A549 (cell line): ENCODE measurements at regions of chr11 and their contacts with region 1.

Region 1: DNA sequence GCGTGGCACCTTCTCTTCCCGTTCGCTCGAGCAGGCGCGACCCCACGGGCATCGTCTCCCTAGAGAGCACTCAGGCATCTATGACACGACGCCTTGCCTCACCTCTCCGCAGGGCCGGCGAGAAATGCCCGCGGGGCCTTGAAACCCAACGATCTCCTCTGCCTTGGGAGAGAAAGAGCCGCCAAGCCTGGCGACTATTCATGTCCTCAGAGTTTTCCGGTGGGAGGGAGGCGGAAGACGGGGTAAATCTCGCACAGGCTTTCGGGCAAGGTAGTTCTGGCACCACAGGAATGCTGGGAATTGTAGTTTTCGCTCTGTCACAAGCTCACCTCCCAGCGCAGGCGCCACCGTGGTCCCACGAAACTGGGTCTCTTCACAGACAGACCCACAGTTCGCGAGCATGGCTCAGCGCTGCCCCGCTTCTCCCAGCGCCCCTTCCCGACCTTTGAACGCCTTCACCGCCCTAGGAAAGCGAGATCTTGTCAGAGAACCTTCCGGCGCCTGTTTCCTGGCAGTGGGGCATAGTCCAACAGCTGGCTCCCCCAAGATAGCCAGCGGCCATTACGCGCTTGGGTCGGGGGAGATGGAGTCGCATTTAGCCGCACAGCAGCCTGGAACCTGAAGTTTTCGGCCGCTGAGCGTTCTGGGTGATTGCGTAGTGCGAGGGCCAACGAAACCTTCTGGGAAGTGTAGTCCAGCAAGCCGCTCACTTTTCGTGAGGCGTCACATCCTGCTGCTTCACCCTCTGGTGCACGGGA is at the start of gene CCDC90B:
- DNase-seq: peak; percentile 97 to 98
- ATAC-seq: peak; percentile 96 to 97
- H3K4me3 ChIP-seq: peak within 1 kb of the TSS; percentile 81
- H3K27ac ChIP-seq: peak within 1 kb of the TSS; percentile 93 to 95
- H3K4me1 ChIP-seq: peaks cover 7% of the 10 kb centered on the region; the same call in 2 of the 3 replicates
- CTCF ChIP-seq: peak; percentile 57
- EP300 ChIP-seq: 0 out of 5 replicates have a peak, but pooled peaks of 1 of the 2 experiments have one; percentile 1
- POLR2A ChIP-seq: peak; percentile 85
- RAD21 ChIP-seq: 0 out of 5 replicates have a peak, but pooled peaks of 1 of the 2 experiments have one; percentile 10
- polyA plus RNA-seq, gene CCDC90B: 57.4 and 80.5 TPM in 2 replicates

Region 2: DNA sequence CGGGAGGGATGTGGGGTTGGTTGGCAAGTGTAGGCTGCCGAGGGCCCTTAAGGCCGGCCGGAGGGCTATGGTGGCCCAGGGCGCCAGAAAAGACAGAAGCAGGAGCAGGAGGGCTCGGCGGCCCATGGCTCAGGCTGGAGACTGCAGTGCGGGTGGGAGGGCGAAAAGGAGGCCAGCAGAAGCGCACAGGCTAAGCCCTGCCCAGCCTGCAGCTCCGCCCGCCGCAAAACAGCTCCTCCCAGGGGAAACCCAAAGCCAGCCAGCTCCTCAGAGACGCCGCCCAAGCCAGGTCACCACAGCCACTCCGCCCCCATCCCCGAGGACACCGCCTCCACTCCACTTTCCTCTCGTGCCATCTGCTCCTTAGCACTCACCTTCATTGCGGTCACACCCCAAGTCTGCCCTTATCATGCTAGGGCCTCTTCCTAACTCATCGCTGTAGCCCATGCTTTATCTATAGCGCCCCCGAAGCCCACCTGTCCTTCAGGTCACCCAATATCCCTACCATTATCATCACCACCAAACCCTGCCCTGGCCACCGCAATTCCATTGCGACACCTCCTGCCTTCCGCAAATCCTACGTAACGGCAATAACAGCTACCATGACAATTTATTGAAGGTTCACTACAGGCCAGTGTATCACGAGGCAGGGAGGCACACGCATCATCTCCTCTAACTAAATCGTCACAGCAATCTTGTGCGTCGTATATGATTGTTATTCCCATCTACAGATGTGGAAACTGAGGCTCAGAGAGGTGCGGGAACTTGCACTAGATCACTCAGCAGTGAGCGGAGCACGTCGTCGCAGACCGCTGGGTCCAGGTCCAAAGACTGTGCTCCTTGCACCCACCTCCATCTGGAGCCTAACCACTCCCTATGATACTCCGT is 385.4 kb before region 1 on chr11 and contains the start of gene PRCP:
- CTCF ChIA-PET with region 1: interaction called, 3 read pairs
- POLR2A ChIA-PET with region 1: interaction called, 34 read pairs
- DNase-seq: peak; percentile 91 to 94
- ATAC-seq: peak; percentile 90 to 95
- H3K4me3 ChIP-seq: peak within 1 kb of the TSS; percentile 72
- H3K27ac ChIP-seq: peak within 1 kb of the TSS; percentile 81 to 93
- H3K4me1 ChIP-seq: peaks cover 13% of the 10 kb centered on the region
- CTCF ChIP-seq: no peak
- EP300 ChIP-seq: no peak
- POLR2A ChIP-seq: peak; percentile 83
- RAD21 ChIP-seq: no peak; a peak in 1 of 5 replicates
- polyA plus RNA-seq, gene PRCP: 86.0 and 86.2 TPM in 2 replicates

Region 3: GRCh38 chr11:83326311-83326710 is 40.4 kb after region 1 on chr11:
- CTCF ChIA-PET with region 1: no interaction called
- POLR2A ChIA-PET with region 1: interaction called, 11 read pairs
- DNase-seq: no peak
- ATAC-seq: no peak
- H3K4me3 ChIP-seq: no peak overlapping the region
- H3K27ac ChIP-seq: no peak overlapping the region
- H3K4me1 ChIP-seq: no peaks in the 10 kb centered on the region
- CTCF ChIP-seq: no peak
- EP300 ChIP-seq: no peak
- POLR2A ChIP-seq: no peak
- RAD21 ChIP-seq: no peak

Region 4: GRCh38 chr11:83349296-83349695 is 63.3 kb after region 1 on chr11:
- CTCF ChIA-PET with region 1: no interaction called
- POLR2A ChIA-PET with region 1: no interaction called
- DNase-seq: no peak
- ATAC-seq: no peak
- H3K4me3 ChIP-seq: no peak overlapping the region
- H3K27ac ChIP-seq: no peak overlapping the region
- H3K4me1 ChIP-seq: no peaks in the 10 kb centered on the region
- CTCF ChIP-seq: no peak
- EP300 ChIP-seq: no peak
- POLR2A ChIP-seq: no peak
- RAD21 ChIP-seq: no peak

Region 5: GRCh38 chr11:83724008-83724461 is 438.1 kb after region 1 on chr11:
- CTCF ChIA-PET with region 1: interaction called, 10 read pairs
- POLR2A ChIA-PET with region 1: no interaction called
- DNase-seq: peak; percentile 10 to 69
- ATAC-seq: peak; percentile 75 to 89
- H3K4me3 ChIP-seq: peak overlapping the region; percentile 35
- H3K27ac ChIP-seq: no peak overlapping the region
- H3K4me1 ChIP-seq: no peaks in the 10 kb centered on the region; the same call in 2 of the 3 replicates
- CTCF ChIP-seq: peak; percentile 52
- EP300 ChIP-seq: no peak
- POLR2A ChIP-seq: no peak
- RAD21 ChIP-seq: peak; percentile 53 to 70; a peak in 4 of 5 replicates